A673 (cell line): ENCODE measurements at regions of chr1 and their contacts with region 1.

Region 1: GRCh38 chr1:70818401-70818800 is 229.2 kb downstream of the PTGER3 start:
- DNase-seq: peak; percentile 92
- H3K4me3 ChIP-seq: no peak overlapping the region
- H3K27ac ChIP-seq: peak overlapping the region; percentile 18
- H3K4me1 ChIP-seq: peaks cover 34% of the 10 kb centered on the region
- H3K27me3 ChIP-seq: no peaks in the 10 kb centered on the region
- CTCF ChIP-seq: no peak

Region 2: GRCh38 chr1:69611316-69611715 is 1207.1 kb before region 1 on chr1:
- CTCF ChIA-PET with region 1: no interaction called
- POLR2A ChIA-PET with region 1: no interaction called
- intact Hi-C with region 1: loop called (anchors 10 kb)
- DNase-seq: peak; percentile 3
- H3K4me3 ChIP-seq: no peak overlapping the region
- H3K27ac ChIP-seq: no peak overlapping the region
- H3K4me1 ChIP-seq: no peaks in the 10 kb centered on the region
- H3K27me3 ChIP-seq: no peaks in the 10 kb centered on the region
- CTCF ChIP-seq: no peak

Region 3: GRCh38 chr1:70528590-70529333 is 289.6 kb before region 1 on chr1:
- CTCF ChIA-PET with region 1: no interaction called
- POLR2A ChIA-PET with region 1: no interaction called
- intact Hi-C with region 1: loop called (anchors 5 kb)
- DNase-seq: peak; percentile 79
- H3K4me3 ChIP-seq: no peak overlapping the region
- H3K27ac ChIP-seq: peak overlapping the region; percentile 14
- H3K4me1 ChIP-seq: peaks cover 52% of the 10 kb centered on the region
- H3K27me3 ChIP-seq: no peaks in the 10 kb centered on the region
- CTCF ChIP-seq: peak; percentile 83

Region 4: GRCh38 chr1:70737134-70737533 is 81.3 kb before region 1 on chr1:
- CTCF ChIA-PET with region 1: no interaction called
- POLR2A ChIA-PET with region 1: no interaction called
- intact Hi-C with region 1: loop called (anchors 5 kb)
- DNase-seq: peak; percentile 87
- H3K4me3 ChIP-seq: no peak overlapping the region
- H3K27ac ChIP-seq: no peak overlapping the region
- H3K4me1 ChIP-seq: peaks cover 28% of the 10 kb centered on the region
- H3K27me3 ChIP-seq: no peaks in the 10 kb centered on the region
- CTCF ChIP-seq: peak; percentile 40; the same call in 1 of the 2 replicates